PC-3 (cell line): ENCODE measurements at regions of chr5 and their contacts with region 1.

Region 1: GRCh38 chr5:169742771-169743296 is 105.8 kb downstream of the DOCK2 start:
- DNase-seq: peak; percentile 88
- ATAC-seq: peak; percentile 87
- H3K4me3 ChIP-seq: peak overlapping the region; percentile 20; the same call in 1 of the 2 replicates
- H3K27ac ChIP-seq: peak overlapping the region; percentile 83
- H3K4me1 ChIP-seq: peaks cover 42% of the 10 kb centered on the region
- H3K27me3 ChIP-seq: no peaks in the 10 kb centered on the region
- CTCF ChIP-seq: no peak

Region 2: GRCh38 chr5:169435506-169436229 is 307.2 kb before region 1 on chr5:
- CTCF ChIA-PET with region 1: no interaction called
- POLR2A ChIA-PET with region 1: no interaction called
- intact Hi-C with region 1: no loop called
- DNase-seq: no peak
- ATAC-seq: no peak
- H3K4me3 ChIP-seq: no peak overlapping the region
- H3K27ac ChIP-seq: no peak overlapping the region
- H3K4me1 ChIP-seq: no peaks in the 10 kb centered on the region
- H3K27me3 ChIP-seq: peaks cover 26% of the 10 kb centered on the region
- CTCF ChIP-seq: no peak

Region 3: GRCh38 chr5:169686137-169686536 is 56.7 kb before region 1 on chr5:
- CTCF ChIA-PET with region 1: no interaction called
- POLR2A ChIA-PET with region 1: no interaction called
- intact Hi-C with region 1: no loop called
- DNase-seq: no peak
- ATAC-seq: no peak
- H3K4me3 ChIP-seq: no peak overlapping the region
- H3K27ac ChIP-seq: no peak overlapping the region
- H3K4me1 ChIP-seq: no peaks in the 10 kb centered on the region
- H3K27me3 ChIP-seq: no peaks in the 10 kb centered on the region
- CTCF ChIP-seq: no peak

Region 4: DNA sequence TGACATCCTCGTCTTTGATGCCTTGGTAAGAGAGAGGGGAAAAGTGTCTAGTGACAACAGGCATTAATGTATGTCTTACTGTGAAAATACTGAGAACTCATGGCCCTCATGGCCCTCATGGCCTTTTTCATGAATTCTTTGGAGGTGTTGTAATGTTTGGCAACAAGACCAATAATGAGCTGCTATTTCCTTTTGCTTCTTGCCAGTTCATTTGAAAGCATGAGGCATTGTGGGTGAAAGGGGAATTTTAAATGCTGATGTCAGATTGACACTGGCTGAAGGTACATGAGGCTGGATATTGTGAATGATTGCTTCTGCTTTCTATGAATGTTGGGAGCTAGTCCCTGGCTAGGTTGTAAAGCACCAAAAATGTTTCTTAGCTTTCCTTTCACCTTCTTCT is 26.6 kb before region 1 on chr5:
- CTCF ChIA-PET with region 1: no interaction called
- POLR2A ChIA-PET with region 1: no interaction called
- intact Hi-C with region 1: loop called (anchors 2 kb)
- DNase-seq: peak; percentile 52
- ATAC-seq: no peak
- H3K4me3 ChIP-seq: no peak overlapping the region
- H3K27ac ChIP-seq: peak overlapping the region; percentile 75; the same call in 1 of the 2 replicates
- H3K4me1 ChIP-seq: peaks cover 24% of the 10 kb centered on the region
- H3K27me3 ChIP-seq: no peaks in the 10 kb centered on the region
- CTCF ChIP-seq: no peak